Dorsolateral prefrontal cortex (tissue), 120 donors: ENCODE measurements at regions of chr2 and their contacts with region 1.

Region 1: GRCh38 chr2:97697252-97698235 is 15.8 kb upstream of the ZAP70 start:
- DNase-seq: peak; percentile 89 to 98 (median 92)
- H3K4me3 ChIP-seq: peak overlapping the region in 25 of 59 donors; percentile 5 to 52 (median 21)
- H3K27ac ChIP-seq: peak overlapping the region in 11 of 59 donors; percentile 0 to 55 (median 19)
- H3K27me3 ChIP-seq: no peaks in the 10 kb centered on the region
- CTCF ChIP-seq: peak; percentile 95 to 100 (median 99)

Region 2: GRCh38 chr2:96065381-96065930 is 1632.1 kb before region 1 on chr2:
- intact Hi-C with region 1: loop called (anchors 10 kb)
- DNase-seq: peak in 2 of 10 donors; percentile 21 to 50
- H3K4me3 ChIP-seq: no peak overlapping the region
- H3K27ac ChIP-seq: peak overlapping the region in 1 of 59 donors; percentile 6
- H3K27me3 ChIP-seq: no peaks in the 10 kb centered on the region
- CTCF ChIP-seq: no peak

Region 3: GRCh38 chr2:97645695-97646629 is 51.6 kb before region 1 on chr2 and contains the start of gene COX5B:
- intact Hi-C with region 1: loop called (anchors 5 to 10 kb)
- DNase-seq: peak; percentile 98 to 100 (median 99)
- H3K4me3 ChIP-seq: peak within 1 kb of the TSS; percentile 65 to 100 (median 98)
- H3K27ac ChIP-seq: peak within 1 kb of the TSS; percentile 74 to 99 (median 95)
- H3K27me3 ChIP-seq: no peaks in the 10 kb centered on the region
- CTCF ChIP-seq: peak in 50 of 56 donors; percentile 13 to 66 (median 39)
- total RNA-seq, gene COX5B: 245 to 509 (median 381) TPM

Region 4: GRCh38 chr2:97663965-97664635 is 33.4 kb before region 1 on chr2 and contains the start of gene ACTR1B:
- intact Hi-C with region 1: loop called (anchors 2 to 5 kb)
- DNase-seq: peak; percentile 95 to 99 (median 98)
- H3K4me3 ChIP-seq: peak within 1 kb of the TSS; percentile 58 to 98 (median 83)
- H3K27ac ChIP-seq: peak within 1 kb of the TSS; percentile 70 to 99 (median 96)
- H3K27me3 ChIP-seq: no peaks in the 10 kb centered on the region
- CTCF ChIP-seq: peak in 53 of 56 donors; percentile 27 to 69 (median 50)
- total RNA-seq, gene ACTR1B: 72.4 to 175 (median 133) TPM

Region 5: DNA sequence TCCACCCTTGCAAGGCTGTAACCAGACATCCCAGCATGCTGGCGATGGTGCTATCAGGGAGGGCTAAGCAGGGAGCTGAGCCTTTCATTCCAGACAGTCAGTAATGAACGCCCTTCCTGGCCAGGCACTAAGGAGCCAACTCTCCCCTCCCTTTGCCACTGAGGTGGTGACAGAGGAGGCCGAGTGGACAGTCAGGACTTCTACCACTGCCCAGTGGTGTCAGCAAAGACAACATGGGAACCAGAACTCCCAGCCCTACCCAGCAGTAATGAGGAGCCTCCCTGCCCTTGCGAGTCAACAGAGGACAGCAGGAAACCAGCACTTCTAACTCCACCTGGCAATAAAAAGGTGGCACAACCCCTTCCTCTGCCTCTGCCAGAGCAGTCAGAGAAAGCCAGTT is 84.4 kb after region 1 on chr2:
- intact Hi-C with region 1: no loop called
- DNase-seq: peak in 1 of 10 donors; percentile 13
- H3K4me3 ChIP-seq: no peak overlapping the region
- H3K27ac ChIP-seq: no peak overlapping the region
- H3K27me3 ChIP-seq: no peaks in the 10 kb centered on the region
- CTCF ChIP-seq: no peak